Psoas muscle (tissue), 8 donors: ENCODE measurements at regions of chr12 and their contacts with region 1.

Region 1: GRCh38 chr12:22018860-22019259 is 27.2 kb upstream of the CMAS start:
- DNase-seq: no peak
- ATAC-seq: peak in 1 of 4 donors; percentile 60
- H3K4me3 ChIP-seq: no peak overlapping the region
- H3K27ac ChIP-seq: no peak overlapping the region
- H3K4me1 ChIP-seq: no peaks in the 10 kb centered on the region
- H3K27me3 ChIP-seq: no peaks in the 10 kb centered on the region
- CTCF ChIP-seq: peak; percentile 61

Region 2: GRCh38 chr12:21697904-21698630 is 320.8 kb before region 1 on chr12:
- intact Hi-C with region 1: loop called (anchors 2 to 5 kb)
- DNase-seq: no peak
- ATAC-seq: peak in 1 of 4 donors; percentile 54
- H3K4me3 ChIP-seq: peak overlapping the region; percentile 28
- H3K27ac ChIP-seq: no peak overlapping the region
- H3K4me1 ChIP-seq: no peaks in the 10 kb centered on the region
- H3K27me3 ChIP-seq: no peaks in the 10 kb centered on the region
- CTCF ChIP-seq: peak; percentile 78

Region 3: GRCh38 chr12:21971344-21971743 is 47.5 kb before region 1 on chr12:
- intact Hi-C with region 1: no loop called
- DNase-seq: no peak
- ATAC-seq: no peak
- H3K4me3 ChIP-seq: no peak overlapping the region
- H3K27ac ChIP-seq: no peak overlapping the region
- H3K4me1 ChIP-seq: no peaks in the 10 kb centered on the region
- H3K27me3 ChIP-seq: no peaks in the 10 kb centered on the region
- CTCF ChIP-seq: no peak